GM12878 (cell line): ENCODE measurements at regions of chr17 and their contacts with region 1.

Region 1: GRCh38 chr17:49315551-49316257 is 46.3 kb downstream of the ZNF652 start:
- DNase-seq: peak; percentile 66
- ATAC-seq: peak; percentile 98
- H3K4me3 ChIP-seq: peak overlapping the region; percentile 26; the same call in 1 of the 2 replicates
- H3K27ac ChIP-seq: peak overlapping the region; percentile 53
- H3K4me1 ChIP-seq: peaks cover 16% of the 10 kb centered on the region
- H3K27me3 ChIP-seq: no peaks in the 10 kb centered on the region
- CTCF ChIP-seq: peak; percentile 70 to 97 (median 81)
- EP300 ChIP-seq: no peak
- POLR2A ChIP-seq: no peak
- RAD21 ChIP-seq: peak; percentile 100

Region 2: DNA sequence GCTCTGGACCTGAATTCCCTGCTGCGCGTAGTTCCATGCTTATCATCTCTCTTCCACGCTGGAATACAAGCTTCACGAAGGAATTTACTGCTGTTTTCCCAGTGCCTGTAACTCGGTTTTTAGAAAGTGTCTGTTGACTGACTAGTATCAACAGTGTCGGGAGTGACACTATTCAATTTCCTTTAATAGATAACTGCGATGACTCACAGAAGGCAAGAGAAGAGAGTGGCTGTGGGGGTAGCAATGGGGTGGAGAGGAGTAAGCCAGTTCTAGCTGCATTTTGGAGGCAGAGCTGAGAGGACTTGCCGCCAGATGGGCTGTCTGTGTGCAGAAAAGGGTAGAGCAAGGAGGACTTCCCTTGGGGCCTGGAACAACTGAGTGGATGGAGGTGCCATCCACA is 157.9 kb before region 1 on chr17:
- CTCF ChIA-PET with region 1: no interaction called
- POLR2A ChIA-PET with region 1: no interaction called
- RAD21 ChIA-PET with region 1: no interaction called
- SMC1A ChIA-PET with region 1: no interaction called
- in situ Hi-C with region 1: no loop called
- intact Hi-C with region 1: no loop called
- DNase-seq: no peak
- ATAC-seq: no peak
- H3K4me3 ChIP-seq: no peak overlapping the region
- H3K27ac ChIP-seq: no peak overlapping the region
- H3K4me1 ChIP-seq: no peaks in the 10 kb centered on the region
- H3K27me3 ChIP-seq: peaks cover 0 to 2% of the 10 kb centered on the region in 2 experiments; a peak in 2 of 4 replicates
- CTCF ChIP-seq: no peak
- EP300 ChIP-seq: no peak
- POLR2A ChIP-seq: no peak
- RAD21 ChIP-seq: no peak

Region 3: GRCh38 chr17:49180303-49180702 is 135.4 kb before region 1 on chr17:
- CTCF ChIA-PET with region 1: interaction called, 13 read pairs
- POLR2A ChIA-PET with region 1: no interaction called
- RAD21 ChIA-PET with region 1: no interaction called
- SMC1A ChIA-PET with region 1: no interaction called
- in situ Hi-C with region 1: no loop called
- intact Hi-C with region 1: no loop called
- DNase-seq: peak; percentile 28
- ATAC-seq: peak; percentile 78
- H3K4me3 ChIP-seq: no peak overlapping the region
- H3K27ac ChIP-seq: no peak overlapping the region
- H3K4me1 ChIP-seq: no peaks in the 10 kb centered on the region
- H3K27me3 ChIP-seq: no peaks in the 10 kb centered on the region
- CTCF ChIP-seq: peak; percentile 81 to 88 (median 88)
- EP300 ChIP-seq: no peak
- POLR2A ChIP-seq: no peak
- RAD21 ChIP-seq: peak; percentile 91

Region 4: DNA sequence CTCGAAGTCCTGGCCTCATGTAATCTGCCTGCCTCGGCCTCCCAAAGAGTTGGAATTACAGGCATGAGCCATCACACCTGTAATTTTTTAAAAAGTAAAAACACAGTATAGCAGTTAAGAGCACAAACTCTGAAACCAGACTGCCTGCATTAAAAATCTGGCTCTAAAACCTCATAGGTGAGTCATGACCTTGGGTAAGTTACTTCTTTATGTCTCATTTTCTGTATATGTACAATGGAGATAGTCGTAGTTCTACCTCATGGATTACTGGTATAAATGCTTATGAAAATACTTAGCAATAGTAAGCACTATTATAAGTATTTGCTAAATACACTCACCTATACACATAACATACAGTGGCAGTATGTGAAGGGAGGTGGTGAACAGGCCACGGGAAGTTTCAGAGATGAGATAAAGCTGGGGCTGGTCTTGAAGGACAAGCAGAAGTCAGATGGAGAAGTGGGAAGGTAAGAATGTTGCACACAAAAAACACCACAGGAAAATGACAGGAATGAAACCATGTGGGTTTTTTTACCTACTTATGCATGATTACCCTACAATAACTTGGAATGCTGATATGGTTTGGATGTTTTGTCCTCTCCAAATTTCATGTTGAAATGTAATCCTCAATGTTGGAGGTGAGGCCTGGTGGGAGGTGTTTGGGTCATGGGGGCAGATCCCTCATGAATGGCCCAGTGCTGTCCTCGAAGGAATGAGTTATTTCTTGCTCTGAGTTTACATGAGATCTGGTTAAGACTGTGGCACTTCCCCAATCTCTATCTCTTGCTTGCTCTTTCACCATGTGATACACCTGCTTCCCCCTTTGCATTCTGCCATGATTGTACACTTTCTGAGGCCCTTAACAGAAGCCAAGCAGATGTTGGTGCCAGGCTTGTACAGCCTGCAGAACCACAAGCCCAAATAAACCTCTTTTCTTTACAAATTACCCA is 12.4 kb after region 1 on chr17:
- CTCF ChIA-PET with region 1: interaction called, 21 read pairs
- POLR2A ChIA-PET with region 1: no interaction called
- RAD21 ChIA-PET with region 1: interaction called, 5 read pairs
- SMC1A ChIA-PET with region 1: interaction called, 11 read pairs
- in situ Hi-C with region 1: no loop called
- intact Hi-C with region 1: no loop called
- DNase-seq: no peak
- ATAC-seq: peak; percentile 90
- H3K4me3 ChIP-seq: no peak overlapping the region
- H3K27ac ChIP-seq: peak overlapping the region; percentile 39
- H3K4me1 ChIP-seq: peaks cover 13% of the 10 kb centered on the region
- H3K27me3 ChIP-seq: no peaks in the 10 kb centered on the region
- CTCF ChIP-seq: no peak
- EP300 ChIP-seq: no peak
- POLR2A ChIP-seq: no peak
- RAD21 ChIP-seq: no peak

Region 5: DNA sequence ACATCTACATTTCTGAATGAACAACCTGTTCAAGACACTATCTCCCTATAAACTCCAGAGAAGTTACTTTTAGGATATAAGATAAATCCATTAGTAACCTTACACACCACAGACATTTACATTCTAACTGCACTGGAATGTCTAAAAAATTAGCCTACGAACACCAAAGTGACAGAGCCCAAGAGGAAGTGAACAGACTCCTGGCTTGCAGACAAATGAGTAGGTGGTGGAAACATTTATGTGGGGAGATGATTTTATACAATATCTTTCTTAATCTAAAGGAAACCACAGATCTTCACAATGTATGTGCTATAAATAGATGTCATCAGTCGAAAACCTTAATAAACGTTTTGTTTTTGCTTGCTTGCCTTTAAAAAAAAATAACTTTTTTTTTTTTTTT is 27.6 kb after region 1 on chr17:
- CTCF ChIA-PET with region 1: interaction called, 36 read pairs
- POLR2A ChIA-PET with region 1: no interaction called
- RAD21 ChIA-PET with region 1: interaction called, 21 read pairs
- SMC1A ChIA-PET with region 1: interaction called, 13 read pairs
- in situ Hi-C with region 1: no loop called
- intact Hi-C with region 1: no loop called
- DNase-seq: no peak
- ATAC-seq: peak; percentile 28
- H3K4me3 ChIP-seq: no peak overlapping the region
- H3K27ac ChIP-seq: peak overlapping the region; percentile 47
- H3K4me1 ChIP-seq: peaks cover 32% of the 10 kb centered on the region
- H3K27me3 ChIP-seq: no peaks in the 10 kb centered on the region
- CTCF ChIP-seq: no peak
- EP300 ChIP-seq: no peak
- POLR2A ChIP-seq: no peak
- RAD21 ChIP-seq: no peak

Region 6: DNA sequence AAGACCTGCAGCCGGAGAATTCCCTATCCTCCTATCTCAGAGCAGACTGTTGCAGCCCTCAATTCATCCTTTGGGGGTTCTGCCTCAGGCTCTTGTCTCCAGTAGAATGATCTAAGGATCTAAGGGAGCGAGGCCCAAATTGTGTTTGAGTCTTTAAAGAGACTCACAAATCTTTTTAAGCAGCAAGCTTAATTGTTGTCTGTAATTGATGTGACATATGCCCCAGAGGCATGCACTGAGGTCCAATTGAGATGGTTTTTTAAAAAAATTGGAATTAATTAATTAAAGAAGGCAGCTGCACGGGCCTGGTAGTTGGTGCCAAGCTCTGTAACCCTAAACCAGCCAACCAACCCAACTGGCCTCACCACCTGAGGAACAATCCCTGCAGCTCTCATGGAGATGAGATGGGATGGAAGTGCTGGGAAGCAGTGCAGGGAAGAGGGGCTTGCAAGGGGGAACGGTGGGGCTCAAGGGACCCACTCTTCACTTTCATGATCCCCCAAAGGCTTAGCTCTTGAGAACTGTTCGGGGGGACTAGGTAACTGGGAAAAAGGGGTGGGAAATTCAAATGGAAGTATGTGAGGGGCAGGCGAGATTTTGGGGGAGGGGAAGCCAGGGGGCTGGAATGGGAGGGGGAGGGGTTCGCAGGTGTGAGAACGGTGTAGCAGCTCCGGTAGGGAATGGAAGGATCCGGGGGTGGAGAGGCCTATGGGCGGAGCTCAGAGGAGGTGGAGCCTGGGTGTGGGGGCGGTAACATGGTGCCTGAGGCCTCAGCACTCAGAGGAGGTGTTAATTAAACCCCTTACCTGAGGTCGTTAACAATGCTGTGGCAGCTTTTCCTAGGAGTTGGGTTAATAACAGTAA is 55.5 kb after region 1 on chr17:
- CTCF ChIA-PET with region 1: interaction called, 330 read pairs
- POLR2A ChIA-PET with region 1: interaction called, 6 read pairs
- RAD21 ChIA-PET with region 1: interaction called, 115 read pairs
- SMC1A ChIA-PET with region 1: interaction called, 140 read pairs
- in situ Hi-C with region 1: loop called (anchors 5 kb)
- intact Hi-C with region 1: loop called (anchors 1 kb)
- DNase-seq: no peak
- ATAC-seq: no peak
- H3K4me3 ChIP-seq: no peak overlapping the region
- H3K27ac ChIP-seq: no peak overlapping the region
- H3K4me1 ChIP-seq: no peaks in the 10 kb centered on the region
- H3K27me3 ChIP-seq: no peaks in the 10 kb centered on the region
- CTCF ChIP-seq: no peak
- EP300 ChIP-seq: no peak
- POLR2A ChIP-seq: no peak
- RAD21 ChIP-seq: no peak

Region 7: DNA sequence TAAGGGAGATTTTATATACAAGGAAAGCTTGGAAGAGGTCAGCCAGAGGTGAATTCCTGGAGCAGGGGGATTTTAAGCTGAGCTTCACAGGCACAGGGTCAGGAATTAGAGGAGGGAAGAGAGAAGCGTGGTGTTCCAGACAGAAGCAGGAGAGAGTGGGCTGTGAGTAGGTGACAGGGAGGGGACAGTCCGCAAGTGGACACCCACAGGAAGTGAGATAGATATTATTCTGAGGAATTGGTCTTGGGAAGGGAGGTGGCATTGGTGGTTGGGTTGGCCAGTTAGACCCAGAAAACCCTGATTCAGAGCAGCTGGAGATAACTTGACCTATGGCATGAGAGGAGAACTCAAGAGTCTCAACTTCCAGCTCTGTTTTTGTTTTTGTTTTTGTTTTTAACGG is 84.3 kb after region 1 on chr17:
- CTCF ChIA-PET with region 1: interaction called, 49 read pairs
- POLR2A ChIA-PET with region 1: interaction called, 4 read pairs
- RAD21 ChIA-PET with region 1: interaction called, 12 read pairs
- SMC1A ChIA-PET with region 1: interaction called, 85 read pairs
- in situ Hi-C with region 1: no loop called
- intact Hi-C with region 1: loop called (anchors 1 kb)
- DNase-seq: no peak
- ATAC-seq: no peak
- H3K4me3 ChIP-seq: no peak overlapping the region
- H3K27ac ChIP-seq: no peak overlapping the region
- H3K4me1 ChIP-seq: peaks cover 6% of the 10 kb centered on the region
- H3K27me3 ChIP-seq: no peaks in the 10 kb centered on the region
- CTCF ChIP-seq: no peak
- EP300 ChIP-seq: no peak
- POLR2A ChIP-seq: no peak
- RAD21 ChIP-seq: no peak

Region 8: GRCh38 chr17:49548506-49549310 is 233.0 kb after region 1 on chr17:
- CTCF ChIA-PET with region 1: no interaction called
- POLR2A ChIA-PET with region 1: no interaction called
- RAD21 ChIA-PET with region 1: no interaction called
- SMC1A ChIA-PET with region 1: no interaction called
- in situ Hi-C with region 1: loop called (anchors 5 kb)
- intact Hi-C with region 1: no loop called
- DNase-seq: no peak
- ATAC-seq: peak; percentile 81
- H3K4me3 ChIP-seq: no peak overlapping the region
- H3K27ac ChIP-seq: no peak overlapping the region
- H3K4me1 ChIP-seq: no peaks in the 10 kb centered on the region
- H3K27me3 ChIP-seq: 0 out of 4 replicates have a peak, but pooled peaks cover 0 to 2% of the 10 kb centered on the region in 2 experiments
- CTCF ChIP-seq: peak; percentile 44 to 57 (median 50); a peak in 4 of 6 replicates
- EP300 ChIP-seq: no peak
- POLR2A ChIP-seq: no peak
- RAD21 ChIP-seq: peak; percentile 69